PC-3 (cell line): ENCODE measurements at regions of chr15 and their contacts with region 1.

Region 1: GRCh38 chr15:101014921-101015841 is 96.0 kb downstream of the LRRK1 start:
- DNase-seq: peak; percentile 75
- ATAC-seq: peak; percentile 73
- H3K4me3 ChIP-seq: no peak overlapping the region
- H3K27ac ChIP-seq: no peak overlapping the region
- H3K4me1 ChIP-seq: no peaks in the 10 kb centered on the region
- H3K27me3 ChIP-seq: no peaks in the 10 kb centered on the region
- CTCF ChIP-seq: peak; percentile 90

Region 2: GRCh38 chr15:101031213-101031612 is 16.0 kb after region 1 on chr15:
- CTCF ChIA-PET with region 1: no interaction called
- POLR2A ChIA-PET with region 1: no interaction called
- intact Hi-C with region 1: no loop called
- DNase-seq: peak; percentile 24
- ATAC-seq: peak; percentile 31; the same call in 1 of the 2 replicates
- H3K4me3 ChIP-seq: no peak overlapping the region
- H3K27ac ChIP-seq: no peak overlapping the region
- H3K4me1 ChIP-seq: no peaks in the 10 kb centered on the region
- H3K27me3 ChIP-seq: no peaks in the 10 kb centered on the region
- CTCF ChIP-seq: no peak

Region 3: DNA sequence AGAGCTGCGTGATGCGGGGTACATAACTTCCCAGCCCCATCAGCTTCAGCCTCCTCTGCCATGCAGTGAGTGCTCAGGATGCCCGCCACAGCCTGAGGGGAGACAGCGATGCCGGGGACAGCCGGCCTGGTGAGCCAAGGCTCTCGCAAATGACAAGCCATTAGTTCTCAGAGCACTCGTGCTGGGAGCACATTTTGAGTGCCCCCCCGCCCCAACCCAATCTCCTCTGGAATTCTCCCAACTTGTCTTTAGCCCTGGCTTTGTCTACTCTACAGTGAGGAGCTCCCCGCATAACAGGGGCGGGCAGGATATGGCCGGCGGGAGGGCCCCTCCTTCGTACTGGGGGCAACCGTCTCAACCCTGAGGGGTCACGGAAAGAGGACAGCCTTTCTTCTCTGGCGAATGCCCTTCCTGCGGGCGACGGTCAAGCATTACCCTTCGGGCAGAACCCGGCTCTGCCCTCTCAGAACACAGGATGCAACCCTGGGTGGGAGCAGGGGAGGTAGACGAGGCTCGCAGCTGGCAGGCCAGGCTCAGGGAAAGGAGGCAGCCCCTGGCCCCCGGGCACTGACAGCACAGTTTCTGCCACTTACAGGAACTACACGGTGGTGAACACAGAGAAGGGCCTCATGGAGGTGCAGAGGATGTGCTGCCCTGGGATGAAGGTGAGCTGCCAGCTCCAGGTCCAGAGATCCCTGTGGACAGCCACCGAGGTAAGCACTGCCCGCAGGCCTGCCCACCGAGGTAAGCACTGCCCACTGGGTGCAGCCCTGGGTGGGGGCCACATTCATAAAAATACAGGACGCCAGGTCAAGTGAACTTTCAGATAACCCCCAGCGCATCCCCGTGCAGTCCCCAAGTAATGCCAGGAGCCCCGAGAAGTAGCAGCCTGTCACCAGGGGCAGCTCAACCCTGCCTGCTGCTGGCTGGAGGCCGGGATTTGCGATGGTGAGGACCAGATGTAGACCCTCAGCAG is 45.7 kb after region 1 on chr15:
- CTCF ChIA-PET with region 1: interaction called, 12 read pairs
- POLR2A ChIA-PET with region 1: no interaction called
- intact Hi-C with region 1: no loop called
- DNase-seq: no peak
- ATAC-seq: no peak
- H3K4me3 ChIP-seq: no peak overlapping the region
- H3K27ac ChIP-seq: no peak overlapping the region
- H3K4me1 ChIP-seq: no peaks in the 10 kb centered on the region
- H3K27me3 ChIP-seq: no peaks in the 10 kb centered on the region
- CTCF ChIP-seq: no peak

Region 4: GRCh38 chr15:101258238-101259144 is 243.3 kb after region 1 on chr15:
- CTCF ChIA-PET with region 1: no interaction called
- POLR2A ChIA-PET with region 1: no interaction called
- intact Hi-C with region 1: loop called (anchors 1 kb)
- DNase-seq: peak; percentile 80
- ATAC-seq: peak; percentile 87
- H3K4me3 ChIP-seq: peak overlapping the region; percentile 34; the same call in 1 of the 2 replicates
- H3K27ac ChIP-seq: no peak overlapping the region
- H3K4me1 ChIP-seq: no peaks in the 10 kb centered on the region
- H3K27me3 ChIP-seq: no peaks in the 10 kb centered on the region
- CTCF ChIP-seq: peak; percentile 95